Right cardiac atrium (tissue), 5 donors: ENCODE measurements at regions of chrX and their contacts with region 1.

Region 1: GRCh38 chrX:43958529-43958928 is 14.7 kb downstream of the NDP start:
- DNase-seq: no peak
- ATAC-seq: peak; percentile 65 to 86
- H3K4me3 ChIP-seq: no peak overlapping the region
- H3K27ac ChIP-seq: no peak overlapping the region
- H3K4me1 ChIP-seq: no peaks in the 10 kb centered on the region
- H3K27me3 ChIP-seq: no peaks in the 10 kb centered on the region

Region 2: DNA sequence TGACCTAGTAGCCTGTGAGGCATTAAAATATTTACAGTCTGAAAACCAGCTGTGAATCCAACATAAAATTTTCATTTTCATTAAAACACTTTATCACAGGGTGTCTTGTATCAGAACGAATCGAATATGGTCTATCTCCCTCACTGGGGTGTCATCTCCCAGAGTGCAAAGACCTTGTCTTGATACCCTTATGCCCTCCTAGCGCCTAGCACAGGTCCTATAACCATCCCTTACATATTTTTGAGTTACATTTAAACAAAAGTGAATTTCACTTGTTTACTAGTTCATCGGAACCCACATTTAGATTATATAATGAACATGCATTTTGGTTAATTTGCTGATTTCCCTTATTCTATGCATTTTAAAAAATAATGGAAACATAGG is 1228.1 kb after region 1 on chrX:
- intact Hi-C with region 1: loop called in 1 of 4 experiments (anchors 5 kb)
- DNase-seq: no peak
- ATAC-seq: no peak
- H3K4me3 ChIP-seq: no peak overlapping the region
- H3K27ac ChIP-seq: no peak overlapping the region
- H3K4me1 ChIP-seq: no peaks in the 10 kb centered on the region
- H3K27me3 ChIP-seq: no peaks in the 10 kb centered on the region